PC-9 (cell line): ENCODE measurements at regions of chr11 and their contacts with region 1.

Region 1: GRCh38 chr11:65083834-65084597 is at the starts of genes CDCA5 and ZFPL1:
- DNase-seq: peak; percentile 89 to 97
- H3K4me3 ChIP-seq: peak within 1 kb of the TSS; percentile 82
- H3K27ac ChIP-seq: peak within 1 kb of the TSS; percentile 82
- H3K4me1 ChIP-seq: peaks cover 17% of the 10 kb centered on the region
- H3K27me3 ChIP-seq: no peaks in the 10 kb centered on the region
- CTCF ChIP-seq: no peak
- total RNA-seq, gene CDCA5: 86.4 and 97.8 TPM in 2 replicates
- total RNA-seq, gene ZFPL1: 63.6 and 68.2 TPM in 2 replicates

Region 2: GRCh38 chr11:65040847-65041621 is 43.0 kb before region 1 on chr11 and contains the start of gene SAC3D1:
- CTCF ChIA-PET with region 1: no interaction called
- POLR2A ChIA-PET with region 1: interaction called, 3 read pairs
- intact Hi-C with region 1: loop called (anchors 5 kb)
- DNase-seq: peak; percentile 94 to 95
- H3K4me3 ChIP-seq: peak within 1 kb of the TSS; percentile 82
- H3K27ac ChIP-seq: peak within 1 kb of the TSS; percentile 67
- H3K4me1 ChIP-seq: peaks cover 25% of the 10 kb centered on the region
- H3K27me3 ChIP-seq: no peaks in the 10 kb centered on the region
- CTCF ChIP-seq: no peak
- total RNA-seq, gene SAC3D1: 33.9 and 48.0 TPM in 2 replicates

Region 3: DNA sequence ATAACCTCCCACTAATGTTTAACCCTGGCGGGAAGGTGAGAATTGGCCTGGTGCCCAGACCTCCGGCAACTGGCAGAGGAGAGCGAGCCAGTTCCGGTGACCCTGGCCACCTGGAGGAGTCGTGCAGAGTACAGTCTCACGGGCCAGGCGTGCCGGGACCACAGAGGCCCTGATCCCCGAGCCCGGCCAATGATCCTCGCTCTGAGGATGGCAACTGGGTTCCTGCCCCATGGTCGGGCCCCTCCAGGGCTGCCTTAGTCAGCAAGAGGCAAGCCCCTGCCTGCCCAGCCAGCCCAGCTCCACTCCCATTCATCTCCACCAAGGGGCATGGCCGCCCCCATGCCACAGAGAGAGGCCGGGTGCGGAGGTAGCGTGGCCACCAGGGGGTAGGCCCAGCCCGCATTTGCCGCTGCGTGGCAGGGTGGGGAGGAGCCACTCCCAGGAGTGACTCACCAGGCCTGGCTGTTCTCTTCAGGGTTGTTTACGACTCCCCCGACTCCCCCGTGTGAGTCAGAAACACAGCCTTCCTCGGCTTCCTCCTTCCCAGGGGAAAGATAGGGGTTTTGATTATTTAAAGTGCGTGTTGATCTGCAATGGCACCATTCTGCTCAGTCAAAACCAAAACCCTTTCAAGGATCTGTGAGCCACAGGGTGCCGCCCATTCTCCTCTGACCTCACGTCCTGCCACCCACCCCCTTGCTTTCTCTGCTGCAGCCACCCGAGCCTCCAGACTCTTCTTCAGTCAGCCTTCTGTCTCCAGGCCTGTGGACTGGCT is 298.2 kb after region 1 on chr11 and contains the start of gene SLC25A45:
- CTCF ChIA-PET with region 1: no interaction called
- POLR2A ChIA-PET with region 1: no interaction called
- intact Hi-C with region 1: no loop called
- DNase-seq: peak; percentile 97 to 98
- H3K4me3 ChIP-seq: peak within 1 kb of the TSS; percentile 48; the same call in 1 of the 2 replicates
- H3K27ac ChIP-seq: peak within 1 kb of the TSS; percentile 93
- H3K4me1 ChIP-seq: peaks cover 64% of the 10 kb centered on the region
- H3K27me3 ChIP-seq: no peaks in the 10 kb centered on the region
- CTCF ChIP-seq: peak; percentile 79
- total RNA-seq, gene SLC25A45: 9.5 and 9.8 TPM in 2 replicates